ENCODE measurements at regions of chr16 and their contacts with region 1.

Region 1: DNA sequence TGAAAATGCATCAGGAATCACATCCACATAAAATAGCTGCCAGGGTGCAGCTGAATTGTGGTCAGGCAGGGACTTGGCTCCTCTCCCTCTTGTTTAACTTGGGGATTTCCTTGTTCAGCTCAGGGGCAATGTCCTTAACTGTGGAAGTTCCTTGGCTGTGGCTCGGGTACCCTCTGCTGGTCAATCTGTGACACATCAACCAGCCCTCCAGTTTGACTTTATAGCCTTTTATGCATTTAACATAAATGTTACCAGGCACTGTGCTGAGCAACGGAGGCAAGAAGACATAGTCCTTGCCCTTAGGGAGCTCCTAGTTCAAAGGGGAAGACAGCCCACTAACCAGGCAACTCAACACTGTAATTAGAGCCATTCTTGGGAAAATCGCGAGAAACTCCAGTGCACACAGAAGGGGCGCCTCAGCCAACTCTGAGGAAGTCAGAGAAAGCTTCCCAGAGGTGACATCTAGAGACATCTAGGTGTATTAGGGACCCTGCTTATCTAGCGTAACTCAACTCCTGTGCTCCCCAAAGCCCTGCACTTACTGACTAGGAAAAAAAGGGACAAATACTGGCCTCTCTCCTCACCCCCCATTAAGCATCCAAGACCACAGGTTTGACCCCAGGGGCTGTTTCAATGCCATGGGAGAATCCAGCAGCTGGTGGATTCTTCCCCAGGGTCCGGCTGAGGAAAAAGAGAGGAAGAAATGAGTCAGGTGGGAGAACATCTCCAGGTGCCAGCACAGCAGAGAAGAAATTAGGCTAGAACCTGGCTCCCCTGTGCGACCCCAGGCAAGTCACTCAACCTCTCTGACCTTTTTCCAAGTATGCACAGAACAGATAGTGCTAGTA is 17.3 kb upstream of the EEF2K start:
- DNase-seq: peak; percentile 92

Region 2: DNA sequence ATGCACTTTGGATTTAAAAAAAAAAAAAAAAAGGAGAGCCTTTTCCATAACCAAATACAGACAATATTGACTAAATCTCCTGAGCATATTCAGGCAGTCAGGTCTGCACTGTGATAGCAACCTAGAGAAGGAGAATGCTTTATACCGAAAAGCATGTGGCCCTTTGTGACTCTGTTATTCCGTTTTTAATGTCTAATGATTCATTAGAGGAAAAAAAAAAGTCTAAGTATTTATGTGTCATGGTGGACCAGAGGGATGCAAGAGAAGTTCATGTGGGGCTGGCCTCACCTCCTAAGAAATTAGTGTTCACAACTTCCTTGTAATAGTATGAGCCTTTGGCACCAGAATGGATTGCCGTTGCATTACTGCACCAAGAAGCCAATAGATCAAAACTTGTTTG is 107.8 kb before region 1 on chr16:
- in situ Hi-C with region 1: loop called (anchors 5 kb)
- DNase-seq: no peak

Region 3: DNA sequence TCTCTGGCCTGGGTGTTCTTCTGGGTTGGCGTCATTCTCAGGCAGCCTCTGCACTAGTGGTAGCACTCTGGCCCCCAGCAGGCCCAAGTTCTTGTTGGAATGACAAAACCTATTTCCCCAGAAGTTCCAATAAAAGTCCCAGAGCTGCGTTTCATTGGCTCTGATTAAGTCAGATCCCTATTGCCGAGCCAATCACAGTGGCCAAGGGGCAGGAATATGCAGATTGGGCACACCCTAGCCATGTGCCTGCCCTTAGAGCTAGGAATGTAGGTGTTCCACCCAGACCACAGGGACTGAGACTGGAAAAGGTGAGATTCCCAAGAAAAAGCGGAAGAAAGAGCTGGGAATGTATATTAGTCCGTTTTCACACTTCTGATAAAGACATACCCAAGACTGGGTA is 63.5 kb after region 1 on chr16:
- in situ Hi-C with region 1: no loop called
- DNase-seq: peak; percentile 44